Dendritic cell treated with granulocyte-macrophage colony-stimulating factor and Interleukin-4, amounts not matched to agents 40 ng/mL and 50 ng/mL, for 4 days (primary cell): ENCODE measurements at regions of chr2 and their contacts with region 1.

Region 1: DNA sequence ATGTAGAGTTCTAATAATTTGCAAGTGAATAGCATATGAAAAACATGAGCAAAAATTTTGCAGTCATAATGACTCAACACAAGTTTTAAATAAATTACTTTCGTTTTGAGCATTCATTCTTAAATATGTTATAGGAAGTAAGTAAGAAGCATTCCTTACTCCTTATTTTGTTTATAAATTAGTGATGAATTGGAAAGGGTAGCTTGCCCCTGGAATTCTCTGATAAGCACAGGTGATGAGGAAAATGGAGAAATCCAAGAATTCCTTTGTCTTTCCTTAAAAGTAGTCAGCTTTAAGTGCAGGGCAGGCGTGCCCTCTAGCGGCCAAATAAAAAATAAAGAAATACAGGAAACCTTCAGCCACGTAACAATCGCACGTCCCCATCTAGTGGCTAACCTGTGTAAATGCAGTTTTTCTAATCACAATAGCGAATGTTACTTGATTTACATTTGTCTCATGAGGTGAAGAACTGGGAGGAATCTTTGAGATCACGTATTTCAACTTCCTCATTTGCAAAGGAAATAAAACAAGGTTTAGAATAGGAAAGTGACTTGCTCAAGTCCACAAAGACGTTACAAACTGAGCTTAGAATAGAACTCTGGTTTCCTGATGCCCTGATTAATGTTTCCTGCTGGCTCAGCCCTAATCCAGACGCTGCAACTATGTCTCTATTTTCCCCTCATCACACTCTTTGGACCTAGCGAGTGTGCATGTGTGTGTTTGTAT is 47.2 kb upstream of the ZNG1B start:
- H3K4me3 Mint-ChIP-seq: peak overlapping the region; percentile 54
- H3K27ac Mint-ChIP-seq: peak overlapping the region; percentile 92
- H3K4me1 Mint-ChIP-seq: peaks cover 51% of the 10 kb centered on the region
- H3K27me3 Mint-ChIP-seq: no peaks in the 10 kb centered on the region

Region 2: DNA sequence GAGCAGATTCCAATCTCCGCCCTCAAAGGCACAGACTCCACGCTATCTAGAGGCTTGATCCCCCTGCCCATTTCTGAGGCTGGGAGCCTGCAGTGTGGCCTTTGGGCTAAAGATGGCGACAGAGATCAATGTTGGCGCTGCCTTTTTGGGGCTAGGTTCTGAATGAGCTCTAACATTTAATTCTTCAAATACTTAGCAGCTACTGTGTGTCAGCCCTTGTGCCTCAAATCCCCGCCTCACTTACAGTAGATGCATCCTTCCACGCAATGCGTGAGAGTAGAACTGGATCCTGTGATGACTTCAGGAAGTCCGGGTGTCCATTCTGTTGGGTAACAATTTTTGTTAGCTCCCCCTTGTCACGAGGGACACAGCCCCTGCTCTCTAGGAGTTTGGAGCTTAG is 310.2 kb before region 1 on chr2:
- intact Hi-C with region 1: loop called (anchors 5 kb)
- H3K4me3 Mint-ChIP-seq: no peak overlapping the region
- H3K27ac Mint-ChIP-seq: no peak overlapping the region
- H3K4me1 Mint-ChIP-seq: peaks cover 77% of the 10 kb centered on the region
- H3K27me3 Mint-ChIP-seq: peaks cover 4% of the 10 kb centered on the region

Region 3: DNA sequence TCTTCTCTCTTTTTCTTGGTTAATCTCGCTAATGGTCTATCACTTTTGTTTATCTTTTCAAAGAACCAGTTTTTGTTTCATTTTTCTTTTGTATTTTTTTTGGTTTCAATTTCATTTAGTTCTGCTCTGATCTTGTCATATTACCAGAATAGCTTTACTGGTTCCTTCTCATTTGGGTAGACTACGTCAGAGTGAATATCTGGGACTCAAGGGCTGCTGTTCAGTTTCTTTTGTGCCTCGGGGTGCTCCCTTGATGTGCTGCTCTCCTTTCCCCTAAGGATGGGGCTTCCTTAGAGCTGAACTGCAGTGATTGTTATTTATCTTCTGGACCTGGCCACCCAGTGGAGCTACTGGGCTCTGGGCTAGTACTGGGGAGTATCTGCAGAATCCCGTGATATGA is 292.2 kb before region 1 on chr2:
- intact Hi-C with region 1: no loop called
- H3K4me3 Mint-ChIP-seq: peak overlapping the region; percentile 30
- H3K27ac Mint-ChIP-seq: peak overlapping the region; percentile 87
- H3K4me1 Mint-ChIP-seq: peaks cover 64% of the 10 kb centered on the region
- H3K27me3 Mint-ChIP-seq: no peaks in the 10 kb centered on the region

Region 4: DNA sequence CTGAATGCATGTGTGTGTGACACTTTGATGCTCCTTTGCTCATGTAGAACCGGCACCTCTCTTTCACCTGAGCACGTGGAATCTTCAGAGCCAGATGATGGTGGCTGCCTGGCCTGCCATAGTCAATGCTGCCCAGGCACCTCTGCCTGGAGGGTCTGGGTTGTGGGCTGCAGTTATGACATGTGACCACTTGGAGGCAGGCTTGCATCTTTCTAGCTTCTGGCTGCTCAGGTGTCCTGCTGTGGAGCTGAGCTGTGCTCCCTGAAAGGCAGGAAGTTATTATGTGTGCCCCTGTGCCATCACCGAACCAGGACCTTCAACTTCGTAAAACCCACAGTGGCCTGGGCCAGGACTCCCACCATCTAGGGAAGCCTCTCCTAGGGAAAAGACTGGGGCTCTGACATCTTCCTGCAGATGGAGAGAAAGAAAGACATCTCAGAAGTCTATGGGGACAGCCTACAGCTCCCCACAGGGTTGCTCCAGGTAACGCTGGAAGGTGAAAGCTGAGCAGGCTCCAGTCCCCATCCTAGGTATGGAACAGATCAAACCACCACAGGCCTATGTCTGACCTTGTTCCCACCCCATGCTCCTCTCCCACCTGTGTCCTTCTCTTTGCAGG is 186.3 kb before region 1 on chr2:
- intact Hi-C with region 1: loop called (anchors 5 kb)
- H3K4me3 Mint-ChIP-seq: no peak overlapping the region
- H3K27ac Mint-ChIP-seq: no peak overlapping the region
- H3K4me1 Mint-ChIP-seq: peaks cover 30% of the 10 kb centered on the region
- H3K27me3 Mint-ChIP-seq: peaks cover 2% of the 10 kb centered on the region

Region 5: GRCh38 chr2:113225263-113226259 is 164.7 kb before region 1 on chr2:
- intact Hi-C with region 1: no loop called
- H3K4me3 Mint-ChIP-seq: no peak overlapping the region
- H3K27ac Mint-ChIP-seq: peak overlapping the region; percentile 20
- H3K4me1 Mint-ChIP-seq: peaks cover 26% of the 10 kb centered on the region
- H3K27me3 Mint-ChIP-seq: no peaks in the 10 kb centered on the region

Region 6: GRCh38 chr2:113248997-113249770 is 141.1 kb before region 1 on chr2:
- intact Hi-C with region 1: loop called (anchors 2 kb)
- H3K4me3 Mint-ChIP-seq: no peak overlapping the region
- H3K27ac Mint-ChIP-seq: no peak overlapping the region
- H3K4me1 Mint-ChIP-seq: peaks cover 30% of the 10 kb centered on the region
- H3K27me3 Mint-ChIP-seq: no peaks in the 10 kb centered on the region

Region 7: GRCh38 chr2:113376913-113377445 is 13.3 kb before region 1 on chr2:
- intact Hi-C with region 1: loop called (anchors 1 kb)
- H3K4me3 Mint-ChIP-seq: no peak overlapping the region
- H3K27ac Mint-ChIP-seq: peak overlapping the region; percentile 97
- H3K4me1 Mint-ChIP-seq: peaks cover 64% of the 10 kb centered on the region
- H3K27me3 Mint-ChIP-seq: no peaks in the 10 kb centered on the region